Ascending aorta (tissue), 2 donors: ENCODE measurements at regions of chr10 and their contacts with region 1.

Region 1: DNA sequence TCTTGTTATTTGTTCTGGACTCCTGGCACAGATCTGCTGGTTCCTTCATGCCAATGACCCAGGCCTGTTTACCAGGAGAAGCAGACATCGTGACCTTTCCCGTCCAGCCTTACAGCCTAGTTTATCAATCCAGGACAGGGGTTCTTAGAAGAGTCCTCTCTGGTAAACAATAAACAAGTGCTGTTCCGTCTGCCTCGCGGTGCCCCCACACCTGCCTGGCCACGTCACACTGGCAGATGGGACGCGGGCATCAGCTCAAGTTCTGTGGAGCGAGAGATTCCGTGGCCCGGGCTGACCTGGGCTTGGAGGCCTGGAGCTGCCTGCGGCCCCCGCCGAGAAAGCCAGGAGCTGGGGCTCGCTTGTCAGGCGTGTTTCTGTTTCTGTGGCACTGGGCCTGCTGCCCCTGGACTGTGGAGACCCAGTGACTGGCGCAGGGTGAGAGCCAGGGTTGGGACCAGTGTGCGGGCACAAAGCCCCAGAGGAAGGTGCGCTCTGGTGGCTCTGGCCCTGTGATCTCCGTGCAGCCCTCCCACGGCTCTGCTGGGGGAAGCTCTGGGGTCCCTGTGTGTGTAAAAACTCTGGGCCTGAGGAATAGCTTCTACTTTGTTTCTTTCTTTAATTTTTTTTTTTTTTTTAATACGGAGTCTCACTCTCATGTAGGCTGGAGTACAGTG is 28.4 kb upstream of the PFKFB3 start:
- DNase-seq: no peak
- H3K4me3 ChIP-seq: peak overlapping the region in 1 of 2 donors; percentile 19
- H3K27ac ChIP-seq: peak overlapping the region; percentile 74 to 85
- H3K4me1 ChIP-seq: peaks cover 24 to 64% of the 10 kb centered on the region in 2 donors
- H3K27me3 ChIP-seq: no peaks in the 10 kb centered on the region
- CTCF ChIP-seq: no peak

Region 2: GRCh38 chr10:5987747-5988146 is 186.6 kb before region 1 on chr10:
- intact Hi-C with region 1: no loop called
- DNase-seq: no peak
- H3K4me3 ChIP-seq: no peak overlapping the region
- H3K27ac ChIP-seq: no peak overlapping the region
- H3K4me1 ChIP-seq: no peaks in the 10 kb centered on the region
- H3K27me3 ChIP-seq: no peaks in the 10 kb centered on the region
- CTCF ChIP-seq: no peak

Region 3: GRCh38 chr10:6191147-6191546 is 16.8 kb after region 1 on chr10:
- intact Hi-C with region 1: loop called (anchors 2 kb)
- DNase-seq: no peak
- H3K4me3 ChIP-seq: no peak overlapping the region
- H3K27ac ChIP-seq: peak overlapping the region; percentile 92 to 97
- H3K4me1 ChIP-seq: peaks cover 22 to 36% of the 10 kb centered on the region in 2 donors
- H3K27me3 ChIP-seq: no peaks in the 10 kb centered on the region
- CTCF ChIP-seq: no peak